ENCODE measurements at regions of chr17 and their contacts with region 1.

Region 1: GRCh38 chr17:75784473-75785015 is at the start of gene UNK:
- DNase-seq: peak; percentile 86 to 98 (median 96)
- ATAC-seq: peak; percentile 80
- H3K4me3 ChIP-seq: peak within 1 kb of the TSS; percentile 94
- H3K4me3 Mint-ChIP-seq: peak within 1 kb of the TSS; percentile 84 to 98 (median 92)
- H3K27ac ChIP-seq: peak within 1 kb of the TSS; percentile 99
- H3K27ac Mint-ChIP-seq: peak within 1 kb of the TSS; percentile 99 to 100 (median 100)
- H3K4me1 ChIP-seq: peaks cover 31 to 33% of the 10 kb centered on the region in 2 donors
- H3K4me1 Mint-ChIP-seq: peaks cover 23 to 60% (median 51%) of the 10 kb centered on the region in 7 donors
- H3K27me3 ChIP-seq: no peaks in the 10 kb centered on the region
- H3K27me3 Mint-ChIP-seq: peaks cover 0 to 2% (median 0%) of the 10 kb centered on the region in 5 donors
- total RNA-seq, gene UNK: 32.0 to 49.8 (median 41.0) TPM

Region 2: DNA sequence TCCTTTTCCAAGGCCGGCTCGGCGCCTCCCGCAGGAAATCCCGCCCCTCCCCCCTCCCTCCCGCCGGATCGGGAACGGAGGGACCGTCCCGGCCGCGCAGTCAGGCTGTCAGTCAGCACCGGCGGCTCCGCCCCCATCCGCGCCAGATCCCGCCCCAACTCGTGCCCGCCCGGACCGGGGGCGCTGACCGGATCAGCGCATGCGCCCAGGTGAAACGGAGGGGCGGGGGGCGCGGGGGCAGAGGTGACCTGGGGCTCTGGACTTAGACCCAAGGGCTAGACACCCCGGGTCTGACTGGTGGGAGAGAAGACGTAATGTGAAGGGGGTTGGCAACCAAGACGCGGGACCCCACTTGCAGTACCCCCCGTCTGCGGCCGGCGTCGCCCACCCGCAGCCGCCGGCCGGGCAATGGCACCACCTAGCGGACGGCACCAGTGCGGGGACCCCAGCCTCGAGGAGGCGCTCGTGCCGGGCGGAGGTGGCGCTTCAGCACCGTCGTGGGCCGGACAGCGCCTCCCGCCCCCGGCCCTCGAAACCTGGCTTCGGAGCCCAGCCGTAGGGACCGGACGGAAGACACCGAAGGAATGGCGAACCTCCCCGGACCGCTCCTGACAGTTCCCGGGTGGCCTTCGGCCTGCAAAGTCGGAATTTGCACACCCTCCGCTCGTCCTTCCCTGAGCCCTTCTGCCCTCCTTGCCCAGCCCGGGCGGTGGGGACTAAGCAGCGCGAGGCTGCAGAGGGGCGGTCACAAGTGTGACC is 268.9 kb before region 1 on chr17 and contains the start of gene CASKIN2:
- CTCF ChIA-PET with region 1: no interaction called
- POLR2A ChIA-PET with region 1: no interaction called
- intact Hi-C with region 1: loop called in 1 of 2 experiments (anchors 2 kb)
- DNase-seq: peak; percentile 57 to 88 (median 70)
- ATAC-seq: peak; percentile 80
- H3K4me3 ChIP-seq: peak within 1 kb of the TSS; percentile 97
- H3K4me3 Mint-ChIP-seq: peak within 1 kb of the TSS; percentile 69 to 85 (median 78)
- H3K27ac ChIP-seq: no peak within 1 kb of the TSS
- H3K27ac Mint-ChIP-seq: peak within 1 kb of the TSS in 4 of 9 donors; percentile 36 to 63 (median 47)
- H3K4me1 ChIP-seq: peaks cover 23 to 25% of the 10 kb centered on the region in 2 donors
- H3K4me1 Mint-ChIP-seq: peaks cover 18 to 28% (median 22%) of the 10 kb centered on the region in 7 donors
- H3K27me3 ChIP-seq: no peaks in the 10 kb centered on the region
- H3K27me3 Mint-ChIP-seq: peaks cover 0 to 14% (median 0%) of the 10 kb centered on the region in 5 donors
- total RNA-seq, gene CASKIN2: 0.22 to 1.2 (median 0.92) TPM

Region 3: DNA sequence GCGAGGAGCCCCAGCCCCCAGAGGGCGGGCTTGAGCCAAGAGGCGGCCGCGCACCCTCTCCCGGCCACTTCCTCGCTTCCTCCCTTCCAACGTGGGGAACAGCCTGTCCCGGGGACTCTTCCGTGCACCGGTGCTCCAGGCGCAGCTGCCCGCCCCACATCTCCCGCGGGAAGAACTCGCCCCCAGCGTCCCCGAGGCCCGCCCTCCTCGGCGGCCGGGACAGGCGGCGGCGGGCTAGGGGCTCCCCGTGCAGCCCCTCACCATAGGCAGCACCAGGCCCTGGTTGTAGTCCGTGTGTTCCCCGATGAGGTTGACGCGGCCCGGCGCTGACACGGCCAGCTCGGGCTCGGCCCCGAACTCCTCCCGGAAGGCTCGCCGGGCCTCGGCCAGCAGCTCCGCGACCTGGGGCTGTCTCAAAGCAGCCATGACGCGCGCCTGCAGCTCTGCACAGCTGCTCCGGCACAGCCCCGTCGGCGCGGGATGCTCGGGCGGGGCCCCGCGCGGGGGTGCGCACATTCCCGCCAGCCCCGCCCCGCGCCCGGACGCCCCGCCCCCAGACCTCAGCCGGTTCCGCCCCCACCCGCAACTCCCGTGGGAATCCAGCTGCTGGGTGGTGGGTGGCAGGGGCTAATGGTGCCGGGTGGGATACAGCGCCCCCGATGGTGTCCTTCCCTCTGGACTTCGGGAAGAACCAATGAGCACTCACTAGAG is 19.7 kb before region 1 on chr17 and contains the start of gene GALK1:
- CTCF ChIA-PET with region 1: interaction called, 14 read pairs
- POLR2A ChIA-PET with region 1: interaction called, 244 read pairs
- intact Hi-C with region 1: loop called (anchors 1 to 2 kb)
- DNase-seq: peak; percentile 56 to 78 (median 67)
- ATAC-seq: peak; percentile 97
- H3K4me3 ChIP-seq: peak within 1 kb of the TSS; percentile 71
- H3K4me3 Mint-ChIP-seq: peak within 1 kb of the TSS; percentile 62 to 84 (median 75)
- H3K27ac ChIP-seq: peak within 1 kb of the TSS; percentile 67
- H3K27ac Mint-ChIP-seq: peak within 1 kb of the TSS; percentile 32 to 87 (median 70)
- H3K4me1 ChIP-seq: peaks cover 11% of the 10 kb centered on the region in 2 donors
- H3K4me1 Mint-ChIP-seq: peaks cover 0 to 21% (median 10%) of the 10 kb centered on the region in 7 donors
- H3K27me3 ChIP-seq: no peaks in the 10 kb centered on the region
- H3K27me3 Mint-ChIP-seq: no peaks in the 10 kb centered on the region
- total RNA-seq, gene GALK1: 9.9 to 42.9 (median 22.1) TPM

Region 4: GRCh38 chr17:75839801-75840568 is 55.4 kb after region 1 on chr17:
- CTCF ChIA-PET with region 1: interaction called, 3 read pairs
- POLR2A ChIA-PET with region 1: interaction called, 238 read pairs
- intact Hi-C with region 1: loop called (anchors 1 to 5 kb)
- DNase-seq: no peak
- ATAC-seq: no peak
- H3K4me3 ChIP-seq: no peak overlapping the region
- H3K4me3 Mint-ChIP-seq: no peak overlapping the region
- H3K27ac ChIP-seq: no peak overlapping the region
- H3K27ac Mint-ChIP-seq: peak overlapping the region in 2 of 9 donors; percentile 32 to 36
- H3K4me1 ChIP-seq: peaks cover 20 to 22% of the 10 kb centered on the region in 2 donors
- H3K4me1 Mint-ChIP-seq: peaks cover under 1 to 20% (median 7%) of the 10 kb centered on the region in 7 donors
- H3K27me3 ChIP-seq: no peaks in the 10 kb centered on the region
- H3K27me3 Mint-ChIP-seq: no peaks in the 10 kb centered on the region

Region 5: GRCh38 chr17:75896415-75897159 is 112.0 kb after region 1 on chr17 and contains the start of gene TRIM65:
- CTCF ChIA-PET with region 1: interaction called, 3 read pairs
- POLR2A ChIA-PET with region 1: interaction called, 18 read pairs
- intact Hi-C with region 1: loop called (anchors 1 to 2 kb)
- DNase-seq: peak; percentile 63 to 87 (median 71)
- ATAC-seq: peak; percentile 91
- H3K4me3 ChIP-seq: peak within 1 kb of the TSS; percentile 65
- H3K4me3 Mint-ChIP-seq: peak within 1 kb of the TSS; percentile 55 to 92 (median 84)
- H3K27ac ChIP-seq: peak within 1 kb of the TSS; percentile 75
- H3K27ac Mint-ChIP-seq: peak within 1 kb of the TSS; percentile 66 to 91 (median 85)
- H3K4me1 ChIP-seq: peaks cover 8 to 12% of the 10 kb centered on the region in 2 donors
- H3K4me1 Mint-ChIP-seq: peaks cover 22 to 32% (median 26%) of the 10 kb centered on the region in 7 donors
- H3K27me3 ChIP-seq: no peaks in the 10 kb centered on the region
- H3K27me3 Mint-ChIP-seq: no peaks in the 10 kb centered on the region
- total RNA-seq, gene TRIM65: 20.9 to 37.7 (median 29.6) TPM

Region 6: GRCh38 chr17:75987007-75987406 is 202.5 kb after region 1 on chr17:
- CTCF ChIA-PET with region 1: no interaction called
- POLR2A ChIA-PET with region 1: no interaction called
- intact Hi-C with region 1: no loop called
- DNase-seq: no peak
- ATAC-seq: no peak
- H3K4me3 ChIP-seq: no peak overlapping the region
- H3K4me3 Mint-ChIP-seq: no peak overlapping the region
- H3K27ac ChIP-seq: no peak overlapping the region
- H3K27ac Mint-ChIP-seq: peak overlapping the region in 1 of 9 donors; percentile 31
- H3K4me1 ChIP-seq: no peaks in the 10 kb centered on the region
- H3K4me1 Mint-ChIP-seq: peaks cover 0 to 5% (median under 1%) of the 10 kb centered on the region in 7 donors
- H3K27me3 ChIP-seq: no peaks in the 10 kb centered on the region
- H3K27me3 Mint-ChIP-seq: no peaks in the 10 kb centered on the region

Region 7: GRCh38 chr17:76264755-76265596 is 480.4 kb after region 1 on chr17 and contains the start of gene UBALD2:
- CTCF ChIA-PET with region 1: no interaction called
- POLR2A ChIA-PET with region 1: no interaction called
- intact Hi-C with region 1: loop called in 1 of 2 experiments (anchors 5 kb)
- DNase-seq: peak; percentile 95 to 99 (median 98)
- ATAC-seq: peak; percentile 90
- H3K4me3 ChIP-seq: peak within 1 kb of the TSS; percentile 71
- H3K4me3 Mint-ChIP-seq: peak within 1 kb of the TSS; percentile 87 to 95 (median 92)
- H3K27ac ChIP-seq: peak within 1 kb of the TSS; percentile 92
- H3K27ac Mint-ChIP-seq: peak within 1 kb of the TSS; percentile 81 to 98 (median 94)
- H3K4me1 ChIP-seq: peaks cover 46 to 58% of the 10 kb centered on the region in 2 donors
- H3K4me1 Mint-ChIP-seq: peaks cover 47 to 70% (median 61%) of the 10 kb centered on the region in 7 donors
- H3K27me3 ChIP-seq: no peaks in the 10 kb centered on the region
- H3K27me3 Mint-ChIP-seq: peaks cover 0 to 3% (median 0%) of the 10 kb centered on the region in 5 donors
- total RNA-seq, gene UBALD2: 103 to 263 (median 241) TPM